GM12878 (cell line): ENCODE measurements at regions of chrX and their contacts with region 1.

Region 1: DNA sequence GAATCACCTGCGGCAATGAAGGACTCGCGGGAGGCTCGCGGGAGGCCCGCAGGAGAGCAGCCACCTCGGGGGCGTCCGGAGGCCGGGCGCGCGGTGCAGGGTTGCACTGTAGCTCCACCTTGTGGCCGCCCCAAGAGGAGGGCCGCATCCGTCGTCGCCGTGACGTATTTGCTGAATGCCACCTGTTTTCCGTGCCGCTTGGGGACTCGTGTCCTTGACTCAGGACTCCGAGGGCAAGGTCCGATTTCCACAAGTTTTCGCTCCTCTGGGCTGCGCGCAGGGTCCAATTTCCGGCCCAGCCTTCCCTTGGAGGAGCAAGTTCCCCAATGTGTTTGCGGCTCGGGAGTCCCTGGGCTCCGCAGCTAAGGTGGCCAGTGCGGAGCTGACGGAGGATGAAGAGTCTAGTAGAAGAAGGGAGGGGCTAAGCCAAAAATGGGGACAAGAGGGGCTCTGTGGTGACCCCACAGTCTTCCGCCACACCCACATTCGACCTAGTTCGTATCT is 10.7 kb upstream of the DLG3 start:
- DNase-seq: no peak
- ATAC-seq: peak; percentile 81
- H3K4me3 ChIP-seq: peak overlapping the region; percentile 75
- H3K27ac ChIP-seq: peak overlapping the region; percentile 50; the same call in 1 of the 2 replicates
- H3K4me1 ChIP-seq: peaks cover 10% of the 10 kb centered on the region
- H3K27me3 ChIP-seq: no peaks in the 10 kb centered on the region
- CTCF ChIP-seq: peak; percentile 63 to 71 (median 69)
- EP300 ChIP-seq: no peak
- POLR2A ChIP-seq: 0 out of 2 replicates have a peak, but pooled peaks have one; percentile 43
- RAD21 ChIP-seq: peak; percentile 48

Region 2: GRCh38 chrX:70196961-70197805 is 236.7 kb before region 1 on chrX:
- CTCF ChIA-PET with region 1: interaction called, 4 read pairs
- POLR2A ChIA-PET with region 1: no interaction called
- RAD21 ChIA-PET with region 1: no interaction called
- SMC1A ChIA-PET with region 1: interaction called, 4 read pairs
- in situ Hi-C with region 1: no loop called
- intact Hi-C with region 1: loop called (anchors 1 kb)
- DNase-seq: no peak
- ATAC-seq: peak; percentile 94
- H3K4me3 ChIP-seq: no peak overlapping the region
- H3K27ac ChIP-seq: no peak overlapping the region
- H3K4me1 ChIP-seq: no peaks in the 10 kb centered on the region
- H3K27me3 ChIP-seq: no peaks in the 10 kb centered on the region
- CTCF ChIP-seq: peak; percentile 64 to 74 (median 65)
- EP300 ChIP-seq: no peak
- POLR2A ChIP-seq: no peak
- RAD21 ChIP-seq: peak; percentile 60

Region 3: DNA sequence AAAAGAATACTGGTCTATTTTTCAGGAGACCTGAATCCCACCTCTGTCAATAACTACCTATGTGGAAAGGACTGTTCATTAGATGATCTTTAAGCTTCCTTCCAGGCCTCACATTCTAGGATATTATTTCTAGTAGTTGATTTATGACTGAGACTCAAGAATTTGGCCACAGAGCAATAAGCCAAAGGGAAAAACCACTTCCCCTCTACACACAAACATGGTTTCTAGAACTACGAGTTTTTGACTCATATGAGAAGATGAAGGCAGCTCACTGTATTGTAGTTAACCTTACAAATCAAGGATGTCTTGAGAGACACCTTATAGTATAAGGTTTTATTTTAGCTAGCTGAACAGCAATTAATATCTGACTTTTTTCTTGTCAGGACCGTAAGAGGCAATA is 47.7 kb before region 1 on chrX:
- CTCF ChIA-PET with region 1: no interaction called
- POLR2A ChIA-PET with region 1: no interaction called
- RAD21 ChIA-PET with region 1: no interaction called
- SMC1A ChIA-PET with region 1: no interaction called
- in situ Hi-C with region 1: no loop called
- intact Hi-C with region 1: no loop called
- DNase-seq: no peak
- ATAC-seq: no peak
- H3K4me3 ChIP-seq: no peak overlapping the region
- H3K27ac ChIP-seq: no peak overlapping the region
- H3K4me1 ChIP-seq: no peaks in the 10 kb centered on the region
- H3K27me3 ChIP-seq: no peaks in the 10 kb centered on the region
- CTCF ChIP-seq: no peak
- EP300 ChIP-seq: no peak
- POLR2A ChIP-seq: no peak
- RAD21 ChIP-seq: no peak

Region 4: DNA sequence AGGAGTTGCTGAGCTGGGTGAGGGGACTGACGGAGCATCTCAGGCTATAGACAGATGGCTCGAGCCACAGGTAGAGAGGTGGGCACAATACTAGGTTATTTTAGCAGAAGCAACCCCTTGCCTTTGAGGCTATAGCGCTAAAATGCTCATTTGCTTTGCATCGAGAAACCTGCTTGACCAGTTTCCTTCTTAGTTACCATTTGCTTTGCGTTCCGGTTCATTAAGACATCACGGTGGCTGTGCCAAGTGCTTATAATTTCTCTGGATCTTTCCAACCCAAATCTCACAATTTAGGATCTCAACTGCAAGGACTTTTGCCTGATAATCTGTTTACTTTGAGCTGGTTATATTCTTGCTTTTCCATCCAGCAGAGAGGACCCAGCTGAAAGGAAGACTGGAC is 51.6 kb after region 1 on chrX:
- CTCF ChIA-PET with region 1: no interaction called
- POLR2A ChIA-PET with region 1: no interaction called
- RAD21 ChIA-PET with region 1: no interaction called
- SMC1A ChIA-PET with region 1: no interaction called
- in situ Hi-C with region 1: no loop called
- intact Hi-C with region 1: no loop called
- DNase-seq: no peak
- ATAC-seq: no peak
- H3K4me3 ChIP-seq: no peak overlapping the region
- H3K27ac ChIP-seq: no peak overlapping the region
- H3K4me1 ChIP-seq: no peaks in the 10 kb centered on the region
- H3K27me3 ChIP-seq: no peaks in the 10 kb centered on the region
- CTCF ChIP-seq: no peak
- EP300 ChIP-seq: no peak
- POLR2A ChIP-seq: no peak
- RAD21 ChIP-seq: no peak

Region 5: GRCh38 chrX:70554081-70554480 is 120.2 kb after region 1 on chrX:
- CTCF ChIA-PET with region 1: interaction called, 5 read pairs
- POLR2A ChIA-PET with region 1: no interaction called
- RAD21 ChIA-PET with region 1: interaction called, 6 read pairs
- SMC1A ChIA-PET with region 1: no interaction called
- in situ Hi-C with region 1: no loop called
- intact Hi-C with region 1: loop called (anchors 5 kb)
- DNase-seq: no peak
- ATAC-seq: peak; percentile 63
- H3K4me3 ChIP-seq: no peak overlapping the region
- H3K27ac ChIP-seq: no peak overlapping the region
- H3K4me1 ChIP-seq: no peaks in the 10 kb centered on the region
- H3K27me3 ChIP-seq: no peaks in the 10 kb centered on the region
- CTCF ChIP-seq: peak in 1 of 3 experiments; percentile 30; a peak in 1 of 6 replicates
- EP300 ChIP-seq: no peak
- POLR2A ChIP-seq: no peak
- RAD21 ChIP-seq: 0 out of 2 replicates have a peak, but pooled peaks have one; percentile 34

Region 6: DNA sequence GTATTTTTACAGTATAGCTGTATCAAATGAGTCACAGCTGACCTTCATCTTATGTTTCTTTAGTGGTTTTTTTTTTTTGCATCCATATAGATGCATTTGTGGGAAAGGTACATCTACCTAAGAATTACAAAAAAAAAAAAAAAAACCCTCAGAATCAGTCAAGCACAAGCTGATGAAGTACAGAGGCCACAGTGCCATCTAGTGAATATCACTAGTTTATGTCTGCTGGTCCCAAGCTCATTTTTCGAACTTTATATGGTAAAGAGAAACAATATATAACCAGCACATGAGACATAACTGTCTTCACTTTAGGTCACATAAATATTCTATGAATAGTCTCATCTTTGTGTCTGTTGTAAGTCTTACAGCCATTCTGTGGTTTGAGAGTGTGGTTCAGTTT is 230.8 kb after region 1 on chrX:
- CTCF ChIA-PET with region 1: interaction called, 10 read pairs
- POLR2A ChIA-PET with region 1: no interaction called
- RAD21 ChIA-PET with region 1: interaction called, 3 read pairs
- SMC1A ChIA-PET with region 1: interaction called, 3 read pairs
- in situ Hi-C with region 1: no loop called
- intact Hi-C with region 1: no loop called
- DNase-seq: no peak
- ATAC-seq: peak; percentile 60
- H3K4me3 ChIP-seq: no peak overlapping the region
- H3K27ac ChIP-seq: no peak overlapping the region
- H3K4me1 ChIP-seq: no peaks in the 10 kb centered on the region
- H3K27me3 ChIP-seq: no peaks in the 10 kb centered on the region
- CTCF ChIP-seq: peak; percentile 18 to 41 (median 33); a peak in 4 of 6 replicates
- EP300 ChIP-seq: no peak
- POLR2A ChIP-seq: no peak
- RAD21 ChIP-seq: peak; percentile 48